ENCODE measurements at regions of chr13 and their contacts with region 1.

Region 1: GRCh38 chr13:99366075-99366987 is 59.1 kb upstream of the GPR183 start:
- DNase-seq: no peak
- ATAC-seq: no peak
- H3K4me3 ChIP-seq: no peak overlapping the region
- H3K27ac ChIP-seq: no peak overlapping the region
- H3K4me1 ChIP-seq: no peaks in the 10 kb centered on the region
- H3K27me3 ChIP-seq: no peaks in the 10 kb centered on the region
- CTCF ChIP-seq: no peak
- EP300 ChIP-seq: no peak
- POLR2A ChIP-seq: no peak
- RAD21 ChIP-seq: no peak

Region 2: GRCh38 chr13:99307648-99308339 is 58.5 kb before region 1 on chr13:
- CTCF ChIA-PET with region 1: no interaction called
- POLR2A ChIA-PET with region 1: no interaction called
- in situ Hi-C with region 1: no loop called
- intact Hi-C with region 1: no loop called
- DNase-seq: peak in 3 of 4 experiments; percentile 15 to 79 (median 48)
- ATAC-seq: peak; percentile 80
- H3K4me3 ChIP-seq: no peak overlapping the region
- H3K27ac ChIP-seq: peak overlapping the region; percentile 71
- H3K4me1 ChIP-seq: peaks cover 7 to 30% of the 10 kb centered on the region in 2 experiments
- H3K27me3 ChIP-seq: no peaks in the 10 kb centered on the region
- CTCF ChIP-seq: no peak
- EP300 ChIP-seq: peak; percentile 30; the same call in 1 of the 2 replicates
- POLR2A ChIP-seq: no peak
- RAD21 ChIP-seq: no peak

Region 3: DNA sequence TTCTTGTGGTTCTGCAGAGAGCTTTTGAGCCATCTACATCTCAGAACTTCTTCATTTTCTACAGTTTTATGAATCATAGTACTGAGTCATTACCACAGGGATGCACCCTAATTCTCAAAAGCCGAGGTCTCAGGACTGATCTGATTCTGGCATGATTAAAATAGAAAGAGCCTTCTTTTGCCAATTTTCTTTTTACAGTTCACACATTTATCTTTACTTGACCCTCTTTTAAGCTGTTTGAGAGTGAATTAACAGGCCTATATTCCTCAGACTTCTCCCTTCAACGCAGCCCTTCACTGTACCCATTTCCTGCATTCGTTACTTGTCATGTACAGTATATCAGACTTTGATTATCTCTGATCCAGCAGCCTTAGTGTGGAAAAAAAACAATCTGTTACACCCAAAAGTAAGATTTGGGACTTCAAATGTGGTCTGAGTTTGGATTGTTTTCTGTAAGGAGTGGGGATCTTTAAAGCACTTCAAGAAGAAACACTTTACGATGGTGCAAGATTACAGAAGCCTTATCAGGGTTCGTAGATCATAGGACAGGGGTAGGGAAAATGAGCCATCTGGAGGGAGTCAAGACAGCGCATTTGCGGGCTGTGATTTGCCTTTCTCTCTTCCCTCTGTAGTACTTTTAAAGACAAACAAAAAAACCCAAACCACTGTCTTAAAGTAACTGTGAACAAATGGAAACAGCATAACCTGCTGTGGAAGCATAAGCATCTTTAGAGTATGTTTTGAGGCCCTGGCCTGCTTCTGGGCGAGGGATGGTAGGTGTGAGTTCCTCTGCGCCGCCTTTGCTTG is 43.8 kb before region 1 on chr13:
- CTCF ChIA-PET with region 1: no interaction called
- POLR2A ChIA-PET with region 1: interaction called, 3 read pairs
- in situ Hi-C with region 1: no loop called
- intact Hi-C with region 1: loop called (anchors 2 kb)
- DNase-seq: peak; percentile 20 to 35 (median 23)
- ATAC-seq: no peak
- H3K4me3 ChIP-seq: no peak overlapping the region
- H3K27ac ChIP-seq: peak overlapping the region; percentile 76; the same call in 1 of the 3 replicates
- H3K4me1 ChIP-seq: peaks cover 8 to 42% of the 10 kb centered on the region in 2 experiments; a peak in 4 of 5 replicates
- H3K27me3 ChIP-seq: no peaks in the 10 kb centered on the region
- CTCF ChIP-seq: no peak
- EP300 ChIP-seq: peak; percentile 37; the same call in 1 of the 2 replicates
- POLR2A ChIP-seq: no peak
- RAD21 ChIP-seq: no peak

Region 4: DNA sequence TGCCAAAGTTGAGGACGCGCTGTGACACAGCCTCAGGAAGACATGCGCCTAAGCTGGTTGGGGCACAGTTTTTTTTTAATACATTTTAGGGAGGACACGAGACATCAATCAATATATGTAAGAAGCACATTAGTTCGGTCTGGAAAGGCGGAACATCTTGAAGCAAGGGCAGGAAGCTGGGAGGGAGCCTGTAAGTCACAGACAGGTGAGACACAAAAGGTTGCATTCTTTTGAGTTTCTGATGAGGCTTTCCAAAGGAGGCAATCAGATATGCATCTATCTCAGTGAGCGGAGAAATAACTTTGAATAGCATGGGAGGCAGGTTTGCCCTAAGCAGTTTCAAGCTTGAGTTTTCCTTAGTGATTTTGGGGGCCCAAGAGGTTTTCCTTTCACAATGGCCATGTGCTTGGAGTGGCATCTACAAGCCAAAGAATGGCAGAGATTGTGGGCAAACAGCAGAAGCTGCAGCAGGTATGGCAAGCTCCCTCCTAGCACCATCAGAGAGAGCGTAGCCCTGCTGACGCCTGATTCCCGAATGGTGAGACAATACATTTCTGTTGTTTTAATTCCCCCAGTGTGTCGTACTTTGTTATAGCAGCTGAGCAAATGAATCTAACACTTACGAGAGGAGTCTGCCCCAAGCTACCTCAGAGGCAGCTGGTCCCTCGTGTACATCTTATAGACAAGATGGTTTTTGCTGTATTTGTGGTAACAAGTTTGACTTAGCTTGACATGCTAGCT is 1407.8 kb after region 1 on chr13:
- CTCF ChIA-PET with region 1: no interaction called
- POLR2A ChIA-PET with region 1: no interaction called
- in situ Hi-C with region 1: no loop called
- intact Hi-C with region 1: no loop called
- DNase-seq: no peak
- ATAC-seq: no peak
- H3K4me3 ChIP-seq: no peak overlapping the region
- H3K27ac ChIP-seq: no peak overlapping the region
- H3K4me1 ChIP-seq: no peaks in the 10 kb centered on the region
- H3K27me3 ChIP-seq: no peaks in the 10 kb centered on the region
- CTCF ChIP-seq: no peak
- EP300 ChIP-seq: no peak
- POLR2A ChIP-seq: no peak
- RAD21 ChIP-seq: no peak